CD8-positive, alpha-beta T cell (primary cell): ENCODE measurements at regions of chr17 and their contacts with region 1.

Region 1: GRCh38 chr17:42677008-42677857 is 439 bp upstream of the PLEKHH3 start:
- DNase-seq: peak; percentile 94 to 99 (median 97)
- ATAC-seq: peak; percentile 85
- H3K4me3 ChIP-seq: peak overlapping the region; percentile 54 to 62
- H3K4me3 Mint-ChIP-seq: peak overlapping the region; percentile 87
- H3K27ac ChIP-seq: peak overlapping the region; percentile 25 to 49
- H3K27ac Mint-ChIP-seq: peak overlapping the region; percentile 27
- H3K4me1 ChIP-seq: peaks cover 65% of the 10 kb centered on the region
- H3K4me1 Mint-ChIP-seq: peaks cover 51% of the 10 kb centered on the region
- H3K27me3 ChIP-seq: peaks cover 31 to 58% of the 10 kb centered on the region in 2 experiments
- H3K27me3 Mint-ChIP-seq: peaks cover 41% of the 10 kb centered on the region
- CTCF ChIP-seq: no peak

Region 2: GRCh38 chr17:41930009-41930832 is 747.0 kb before region 1 on chr17 and contains the start of gene ODAD4:
- CTCF ChIA-PET with region 1: no interaction called
- POLR2A ChIA-PET with region 1: no interaction called
- intact Hi-C with region 1: loop called in 1 of 2 experiments (anchors 5 kb)
- DNase-seq: peak; percentile 93 to 99 (median 97)
- ATAC-seq: peak; percentile 99
- H3K4me3 ChIP-seq: peak within 1 kb of the TSS; percentile 61 to 73
- H3K4me3 Mint-ChIP-seq: peak within 1 kb of the TSS; percentile 94
- H3K27ac ChIP-seq: peak within 1 kb of the TSS; percentile 88 to 92
- H3K27ac Mint-ChIP-seq: peak within 1 kb of the TSS; percentile 93
- H3K4me1 ChIP-seq: peaks cover 12% of the 10 kb centered on the region
- H3K4me1 Mint-ChIP-seq: peaks cover 23% of the 10 kb centered on the region
- H3K27me3 ChIP-seq: no peaks in the 10 kb centered on the region
- H3K27me3 Mint-ChIP-seq: no peaks in the 10 kb centered on the region
- CTCF ChIP-seq: peak; percentile 62
- total RNA-seq, gene ODAD4: 1.1 to 1.6 TPM

Region 3: GRCh38 chr17:42337442-42337841 is 339.8 kb before region 1 on chr17:
- CTCF ChIA-PET with region 1: no interaction called
- POLR2A ChIA-PET with region 1: no interaction called
- intact Hi-C with region 1: no loop called
- DNase-seq: peak; percentile 31 to 87 (median 67)
- ATAC-seq: peak; percentile 85
- H3K4me3 ChIP-seq: no peak overlapping the region
- H3K4me3 Mint-ChIP-seq: peak overlapping the region; percentile 57
- H3K27ac ChIP-seq: peak overlapping the region; percentile 41 to 54
- H3K27ac Mint-ChIP-seq: peak overlapping the region; percentile 92
- H3K4me1 ChIP-seq: peaks cover 31% of the 10 kb centered on the region
- H3K4me1 Mint-ChIP-seq: peaks cover 39% of the 10 kb centered on the region
- H3K27me3 ChIP-seq: no peaks in the 10 kb centered on the region
- H3K27me3 Mint-ChIP-seq: no peaks in the 10 kb centered on the region
- CTCF ChIP-seq: no peak

Region 4: DNA sequence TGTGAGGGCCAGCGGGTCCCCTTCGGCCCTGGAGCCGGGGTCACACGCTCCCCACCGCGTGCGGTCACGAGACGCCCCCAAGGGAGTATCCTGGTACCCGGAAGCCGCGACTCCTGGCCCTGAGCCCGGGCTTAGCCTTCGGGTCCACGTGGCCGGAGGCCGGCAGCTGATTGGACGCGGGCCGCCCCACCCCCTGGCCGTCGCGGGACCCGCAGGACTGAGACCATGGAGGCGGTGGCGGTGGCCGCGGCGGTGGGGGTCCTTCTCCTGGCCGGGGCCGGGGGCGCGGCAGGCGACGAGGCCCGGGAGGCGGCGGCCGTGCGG is 141.2 kb before region 1 on chr17 and contains the start of gene NAGLU:
- CTCF ChIA-PET with region 1: no interaction called
- POLR2A ChIA-PET with region 1: no interaction called
- intact Hi-C with region 1: loop called in 1 of 2 experiments (anchors 5 kb)
- DNase-seq: peak; percentile 47 to 89 (median 76)
- ATAC-seq: peak; percentile 69
- H3K4me3 ChIP-seq: peak within 1 kb of the TSS; percentile 56 to 82
- H3K4me3 Mint-ChIP-seq: peak within 1 kb of the TSS; percentile 87
- H3K27ac ChIP-seq: peak within 1 kb of the TSS; percentile 33 to 71
- H3K27ac Mint-ChIP-seq: peak within 1 kb of the TSS; percentile 87
- H3K4me1 ChIP-seq: peaks cover 38% of the 10 kb centered on the region
- H3K4me1 Mint-ChIP-seq: peaks cover 42% of the 10 kb centered on the region
- H3K27me3 ChIP-seq: no peaks in the 10 kb centered on the region
- H3K27me3 Mint-ChIP-seq: no peaks in the 10 kb centered on the region
- CTCF ChIP-seq: no peak
- total RNA-seq, gene NAGLU: 7.4 TPM

Region 5: DNA sequence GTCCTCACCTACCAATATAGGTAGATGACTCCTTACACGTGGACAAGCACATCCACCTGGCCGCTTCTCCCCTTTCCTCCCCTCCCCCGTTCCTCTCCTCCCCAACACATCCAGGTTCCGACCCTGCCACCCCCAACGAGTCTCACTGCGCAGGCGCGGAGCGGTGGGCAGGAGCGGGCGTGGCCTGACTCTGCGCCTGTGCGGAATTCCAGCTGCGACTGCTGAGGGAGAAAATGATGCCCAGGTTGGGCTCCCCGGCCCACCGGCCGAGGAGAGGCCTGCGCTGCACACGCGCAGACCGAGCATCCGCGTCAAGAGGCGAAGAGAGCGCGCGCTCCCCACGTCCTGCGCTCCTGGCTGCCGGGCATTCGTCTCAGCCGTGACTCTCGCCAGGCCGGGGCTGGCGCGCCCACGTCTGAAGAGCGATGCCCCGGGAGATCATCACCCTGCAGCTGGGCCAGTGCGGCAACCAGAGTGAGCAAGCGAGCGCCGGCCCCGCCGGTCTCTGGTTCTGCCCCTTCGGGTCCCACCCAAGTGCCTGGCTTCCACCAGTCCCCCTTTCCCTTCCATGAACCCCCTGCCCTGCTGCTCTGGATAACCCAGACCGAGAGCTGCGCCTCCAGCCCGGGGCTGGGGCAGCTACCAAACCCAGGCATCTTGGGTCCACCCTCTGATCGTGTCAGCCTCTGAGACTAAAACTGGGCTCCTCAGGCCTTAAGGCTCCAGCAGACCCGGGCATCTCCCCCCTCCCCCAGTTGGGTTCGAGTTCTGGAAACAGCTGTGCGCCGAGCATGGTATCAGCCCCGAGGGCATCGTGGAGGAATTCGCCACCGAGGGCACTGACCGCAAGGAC is 17.9 kb before region 1 on chr17 and contains the start of gene TUBG2:
- CTCF ChIA-PET with region 1: interaction called, 8 read pairs
- POLR2A ChIA-PET with region 1: interaction called, 3 read pairs
- intact Hi-C with region 1: loop called in 1 of 2 experiments (anchors 1 kb)
- DNase-seq: peak; percentile 43 to 84 (median 73)
- ATAC-seq: peak; percentile 80
- H3K4me3 ChIP-seq: peak within 1 kb of the TSS; percentile 72 to 92
- H3K4me3 Mint-ChIP-seq: peak within 1 kb of the TSS; percentile 91
- H3K27ac ChIP-seq: peak within 1 kb of the TSS; percentile 5 to 45
- H3K27ac Mint-ChIP-seq: peak within 1 kb of the TSS; percentile 84
- H3K4me1 ChIP-seq: peaks cover 5% of the 10 kb centered on the region
- H3K4me1 Mint-ChIP-seq: peaks cover 14% of the 10 kb centered on the region
- H3K27me3 ChIP-seq: no peaks in the 10 kb centered on the region
- H3K27me3 Mint-ChIP-seq: peaks cover 8% of the 10 kb centered on the region
- CTCF ChIP-seq: no peak
- total RNA-seq, gene TUBG2: 7.4 to 10.6 TPM

Region 6: DNA sequence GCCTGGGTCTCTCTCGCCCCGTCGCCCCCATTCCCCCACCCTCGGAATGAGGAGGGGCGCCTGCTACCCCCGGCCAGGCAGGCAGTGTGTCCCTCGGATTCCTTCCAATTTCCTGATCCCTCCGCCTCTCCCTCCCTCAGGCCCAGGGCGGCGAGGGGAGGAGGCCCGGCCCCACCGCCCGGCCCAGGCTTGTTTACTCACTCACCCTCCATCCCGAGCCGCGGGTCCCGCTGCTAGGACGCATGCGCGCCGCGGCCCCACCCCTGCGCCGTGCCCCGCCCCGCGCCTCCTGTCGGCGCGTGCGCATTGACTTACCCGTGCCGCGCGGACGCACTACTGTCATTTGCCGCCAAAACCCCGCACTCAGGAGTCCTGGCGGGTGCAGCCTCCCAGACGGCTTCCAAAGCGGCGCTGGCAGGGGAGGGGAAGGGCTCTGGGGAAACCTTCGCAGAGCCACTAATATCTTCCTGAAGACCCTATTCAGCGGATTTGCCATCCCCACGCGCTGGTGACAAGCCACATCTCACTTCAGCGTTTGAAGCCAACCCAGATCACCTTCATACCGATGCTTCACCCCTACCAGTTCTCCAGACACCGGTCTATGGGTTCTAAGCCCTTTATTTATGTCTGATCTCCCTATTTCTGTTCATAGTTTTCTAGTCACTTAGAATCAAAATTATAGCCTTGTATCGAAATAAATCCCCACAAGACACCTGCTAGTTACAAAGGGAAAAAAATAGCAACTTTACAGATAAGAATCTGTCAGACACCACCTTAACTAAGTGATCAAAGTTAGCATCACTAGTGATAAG is 67.8 kb after region 1 on chr17 and contains the start of gene EZH1:
- CTCF ChIA-PET with region 1: no interaction called
- POLR2A ChIA-PET with region 1: no interaction called
- intact Hi-C with region 1: loop called (anchors 1 to 2 kb)
- DNase-seq: peak; percentile 82 to 96 (median 90)
- ATAC-seq: peak; percentile 92
- H3K4me3 ChIP-seq: peak within 1 kb of the TSS; percentile 72 to 73
- H3K4me3 Mint-ChIP-seq: peak within 1 kb of the TSS; percentile 98
- H3K27ac ChIP-seq: peak within 1 kb of the TSS; percentile 62 to 79
- H3K27ac Mint-ChIP-seq: peak within 1 kb of the TSS; percentile 96
- H3K4me1 ChIP-seq: peaks cover 17% of the 10 kb centered on the region
- H3K4me1 Mint-ChIP-seq: peaks cover 31% of the 10 kb centered on the region
- H3K27me3 ChIP-seq: peaks cover 0 to 4% of the 10 kb centered on the region in 2 experiments
- H3K27me3 Mint-ChIP-seq: peaks cover 13% of the 10 kb centered on the region
- CTCF ChIP-seq: no peak
- total RNA-seq, gene EZH1: 59.2 to 63.4 TPM